Activated CD4-positive, alpha-beta memory T cell treated with anti-CD3 and anti-CD28 coated beads for 36 hours (primary cell): ENCODE measurements at regions of chrX and their contacts with region 1.

Region 1: GRCh38 chrX:44903107-44903506 is 30.1 kb downstream of the KDM6A start:
- DNase-seq: peak; percentile 41
- H3K4me3 Mint-ChIP-seq: peak overlapping the region; percentile 4
- H3K27ac Mint-ChIP-seq: peak overlapping the region; percentile 53
- H3K4me1 Mint-ChIP-seq: peaks cover 67% of the 10 kb centered on the region
- H3K27me3 Mint-ChIP-seq: no peaks in the 10 kb centered on the region

Region 2: GRCh38 chrX:44637282-44637681 is 265.8 kb before region 1 on chrX:
- CTCF ChIA-PET with region 1: no interaction called
- POLR2A ChIA-PET with region 1: no interaction called
- intact Hi-C with region 1: no loop called
- DNase-seq: no peak
- H3K4me3 Mint-ChIP-seq: no peak overlapping the region
- H3K27ac Mint-ChIP-seq: no peak overlapping the region
- H3K4me1 Mint-ChIP-seq: no peaks in the 10 kb centered on the region
- H3K27me3 Mint-ChIP-seq: peaks cover 1% of the 10 kb centered on the region

Region 3: DNA sequence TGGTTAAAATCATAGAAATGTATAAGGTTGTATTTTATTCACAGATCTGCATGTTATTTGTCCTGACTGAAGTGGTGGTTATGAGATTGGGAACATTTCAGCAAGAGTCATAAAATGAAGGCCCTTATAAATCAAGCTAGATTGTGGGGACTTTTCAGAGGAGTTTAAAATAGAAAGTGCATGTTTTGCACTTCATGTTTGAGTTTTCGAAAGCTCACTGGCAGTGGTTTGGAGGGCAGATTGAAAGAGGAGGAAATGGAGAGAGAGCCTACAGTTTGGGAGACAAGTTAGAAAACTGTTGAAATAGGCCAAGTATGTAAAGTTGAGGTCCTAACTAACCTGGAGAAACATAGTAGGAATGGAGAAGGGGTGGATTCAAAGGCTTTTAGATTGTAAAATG is 94.8 kb after region 1 on chrX:
- CTCF ChIA-PET with region 1: no interaction called
- POLR2A ChIA-PET with region 1: interaction called, 3 read pairs
- intact Hi-C with region 1: loop called (anchors 10 kb)
- DNase-seq: no peak
- H3K4me3 Mint-ChIP-seq: peak overlapping the region; percentile 35
- H3K27ac Mint-ChIP-seq: peak overlapping the region; percentile 90
- H3K4me1 Mint-ChIP-seq: peaks cover 67% of the 10 kb centered on the region
- H3K27me3 Mint-ChIP-seq: no peaks in the 10 kb centered on the region